Activated T-helper 2 cell treated with anti-CD3 and anti-CD28 coated beads, Interferon-gamma antibody, Interleukin-2, Interleukin-4, amounts not matched to agents 10 μg/mL and 5 μg/mL and 100 μg/mL, durations not matched to agents 14 hours and 24 hours and 36 hours (primary cell): ENCODE measurements at regions of chr13 and their contacts with region 1.

Region 1: GRCh38 chr13:41916173-41916954 is 44.5 kb downstream of the VWA8 start:
- DNase-seq: no peak
- H3K4me3 Mint-ChIP-seq: peak overlapping the region; percentile 71
- H3K27ac Mint-ChIP-seq: peak overlapping the region; percentile 93
- H3K4me1 Mint-ChIP-seq: peaks cover 53% of the 10 kb centered on the region
- H3K27me3 Mint-ChIP-seq: no peaks in the 10 kb centered on the region

Region 2: GRCh38 chr13:41848435-41849255 is 67.7 kb before region 1 on chr13:
- intact Hi-C with region 1: no loop called
- DNase-seq: no peak
- H3K4me3 Mint-ChIP-seq: no peak overlapping the region
- H3K27ac Mint-ChIP-seq: no peak overlapping the region
- H3K4me1 Mint-ChIP-seq: no peaks in the 10 kb centered on the region
- H3K27me3 Mint-ChIP-seq: no peaks in the 10 kb centered on the region

Region 3: DNA sequence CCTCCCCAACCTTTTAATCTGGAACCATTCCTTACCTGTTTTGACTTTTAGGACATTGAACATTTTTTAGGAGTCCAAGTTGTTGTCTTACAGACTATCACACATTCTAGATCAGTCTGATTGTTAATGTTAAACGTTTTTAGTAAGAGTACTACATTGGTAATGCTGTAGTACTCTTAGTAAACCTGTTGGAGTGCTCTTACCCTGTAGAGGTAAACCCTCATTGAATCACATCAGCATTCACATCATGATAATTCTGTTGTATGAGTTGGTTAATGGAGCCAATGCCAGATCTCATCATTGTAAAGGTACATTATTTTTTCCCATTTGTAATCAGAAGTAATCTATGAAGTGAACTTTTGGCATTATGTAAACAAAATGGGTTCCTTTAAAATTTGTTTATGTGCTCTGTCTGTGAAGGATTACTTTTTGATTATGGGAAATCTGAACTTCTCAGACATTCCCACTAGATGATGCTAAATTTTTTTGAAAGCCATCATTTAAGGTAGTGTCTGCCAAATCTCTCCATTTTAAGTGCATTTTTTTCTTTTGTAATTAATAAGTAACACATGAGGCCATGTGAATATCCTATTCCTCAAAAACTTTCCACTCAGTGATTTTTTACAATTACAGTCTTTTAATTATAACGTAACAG is 10.6 kb before region 1 on chr13:
- intact Hi-C with region 1: loop called (anchors 1 kb)
- DNase-seq: no peak
- H3K4me3 Mint-ChIP-seq: no peak overlapping the region
- H3K27ac Mint-ChIP-seq: no peak overlapping the region
- H3K4me1 Mint-ChIP-seq: peaks cover 14% of the 10 kb centered on the region
- H3K27me3 Mint-ChIP-seq: no peaks in the 10 kb centered on the region

Region 4: GRCh38 chr13:41928323-41928722 is 12.0 kb after region 1 on chr13:
- intact Hi-C with region 1: loop called (anchors 1 kb)
- DNase-seq: no peak
- H3K4me3 Mint-ChIP-seq: peak overlapping the region; percentile 73
- H3K27ac Mint-ChIP-seq: peak overlapping the region; percentile 82
- H3K4me1 Mint-ChIP-seq: peaks cover 32% of the 10 kb centered on the region
- H3K27me3 Mint-ChIP-seq: no peaks in the 10 kb centered on the region

Region 5: DNA sequence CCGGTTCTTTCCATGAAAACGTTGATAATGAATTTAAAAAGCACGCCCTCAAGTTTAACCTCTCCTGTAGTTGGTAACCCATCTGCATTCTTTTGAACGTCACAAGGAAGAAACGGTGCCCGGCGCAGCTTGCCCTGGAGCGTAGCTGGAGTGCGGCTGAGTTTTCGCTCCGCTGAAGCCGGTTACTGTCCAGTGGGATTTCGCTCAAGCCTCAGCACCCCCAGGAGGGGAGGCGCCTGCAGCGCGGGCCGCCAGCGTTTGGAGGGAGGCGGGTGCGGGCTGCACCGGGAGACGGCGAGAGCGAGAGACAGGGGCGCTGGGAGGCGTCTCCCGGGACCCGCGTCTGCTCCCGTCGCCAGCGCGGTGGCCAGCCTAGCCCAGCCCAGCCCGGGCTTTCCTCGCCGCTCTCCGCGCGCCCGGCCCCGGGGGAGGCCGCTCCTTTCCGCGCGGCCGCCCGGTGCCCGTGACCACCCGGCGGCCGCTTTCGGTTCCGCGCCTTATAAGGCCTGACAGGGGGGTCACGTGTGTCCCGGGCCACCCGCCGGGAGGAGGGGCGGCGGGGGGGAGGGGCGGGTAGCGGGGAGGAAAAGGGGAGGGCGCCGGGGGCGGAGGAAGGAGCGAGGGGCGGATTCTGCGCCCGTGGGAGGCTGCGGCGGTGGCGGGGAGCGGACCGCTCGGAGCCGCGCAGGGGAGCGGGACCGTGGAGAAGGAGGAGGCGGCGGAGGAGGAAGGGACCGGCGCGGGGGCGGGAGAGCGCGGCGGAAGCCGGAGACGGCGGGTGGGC is 123.8 kb after region 1 on chr13:
- intact Hi-C with region 1: loop called (anchors 2 kb)
- DNase-seq: peak; percentile 80
- H3K4me3 Mint-ChIP-seq: peak overlapping the region; percentile 84
- H3K27ac Mint-ChIP-seq: peak overlapping the region; percentile 67
- H3K4me1 Mint-ChIP-seq: peaks cover 17% of the 10 kb centered on the region
- H3K27me3 Mint-ChIP-seq: peaks cover 38% of the 10 kb centered on the region